ENCODE measurements at regions of chr19 and their contacts with region 1.

Region 1: GRCh38 chr19:47013041-47013517 is 6.6 kb upstream of the NPAS1 start:
- DNase-seq: peak; percentile 23
- H3K4me3 ChIP-seq: no peak overlapping the region
- H3K27ac ChIP-seq: peak overlapping the region; percentile 31
- H3K27me3 ChIP-seq: no peaks in the 10 kb centered on the region
- CTCF ChIP-seq: peak; percentile 97

Region 2: GRCh38 chr19:46759817-46760333 is 253.2 kb before region 1 on chr19:
- CTCF ChIA-PET with region 1: interaction called, 11 read pairs
- POLR2A ChIA-PET with region 1: no interaction called
- DNase-seq: peak; percentile 94
- H3K4me3 ChIP-seq: no peak overlapping the region
- H3K27ac ChIP-seq: peak overlapping the region; percentile 96
- H3K27me3 ChIP-seq: no peaks in the 10 kb centered on the region
- CTCF ChIP-seq: no peak

Region 3: DNA sequence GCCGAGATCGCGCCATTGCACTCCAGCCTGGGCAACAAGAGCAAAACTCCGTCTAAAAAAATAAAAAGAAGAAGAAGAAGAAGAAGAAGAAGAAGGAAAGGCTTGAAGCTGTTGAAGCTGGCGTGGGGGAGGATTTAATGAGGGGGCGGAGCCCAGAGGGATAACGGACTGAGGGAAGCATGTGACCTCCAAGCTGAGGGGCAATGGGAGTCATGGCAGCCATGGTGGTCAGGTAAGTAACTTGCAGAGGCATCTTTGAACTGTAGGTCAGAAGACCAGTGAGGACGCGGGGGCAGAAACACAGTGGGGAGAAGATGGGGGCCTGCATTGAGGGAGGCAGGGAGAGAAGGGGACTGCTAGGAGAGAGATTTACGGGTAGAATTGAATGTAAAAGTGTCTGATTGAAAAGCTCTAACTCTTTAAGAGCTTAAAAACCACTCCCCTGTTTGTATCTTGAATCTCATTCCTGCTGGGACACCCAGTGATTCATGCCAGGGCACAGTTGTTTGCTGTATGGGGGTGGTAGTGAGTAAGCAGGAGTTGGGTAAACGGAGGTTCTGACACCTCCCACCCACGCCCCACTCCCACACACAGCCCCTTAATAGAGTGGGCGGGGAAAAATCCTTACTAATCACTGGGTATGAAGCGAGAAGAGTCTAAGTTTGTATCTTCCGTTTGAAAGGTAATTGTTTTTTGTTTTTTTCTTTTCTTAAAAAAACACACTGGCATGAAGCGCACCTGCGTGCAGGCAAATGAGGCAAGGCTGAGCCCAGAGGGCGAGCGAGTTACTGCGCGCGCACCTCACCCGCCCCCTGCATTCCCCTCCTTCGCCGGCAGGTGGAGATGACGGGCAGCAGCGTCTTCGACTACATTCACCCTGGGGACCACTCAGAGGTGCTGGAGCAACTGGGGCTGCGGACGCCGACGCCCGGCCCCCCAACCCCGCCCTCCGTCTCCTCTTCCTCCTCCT is 22.3 kb after region 1 on chr19:
- CTCF ChIA-PET with region 1: interaction called, 46 read pairs
- POLR2A ChIA-PET with region 1: no interaction called
- DNase-seq: peak; percentile 47
- H3K4me3 ChIP-seq: peak overlapping the region; percentile 58
- H3K27ac ChIP-seq: peak overlapping the region; percentile 31
- H3K27me3 ChIP-seq: no peaks in the 10 kb centered on the region
- CTCF ChIP-seq: peak; percentile 91

Region 4: GRCh38 chr19:47124937-47125668 is 112.0 kb after region 1 on chr19:
- CTCF ChIA-PET with region 1: interaction called, 26 read pairs
- POLR2A ChIA-PET with region 1: no interaction called
- DNase-seq: no peak
- H3K4me3 ChIP-seq: no peak overlapping the region
- H3K27ac ChIP-seq: no peak overlapping the region
- H3K27me3 ChIP-seq: no peaks in the 10 kb centered on the region
- CTCF ChIP-seq: peak; percentile 76

Region 5: GRCh38 chr19:47130591-47131227 is 117.6 kb after region 1 on chr19 and contains the start of gene SAE1:
- CTCF ChIA-PET with region 1: interaction called, 26 read pairs
- POLR2A ChIA-PET with region 1: no interaction called
- DNase-seq: peak; percentile 98
- H3K4me3 ChIP-seq: peak within 1 kb of the TSS; percentile 92
- H3K27ac ChIP-seq: peak within 1 kb of the TSS; percentile 81
- H3K27me3 ChIP-seq: no peaks in the 10 kb centered on the region
- CTCF ChIP-seq: peak; percentile 59
- polyA plus RNA-seq, gene SAE1: 142 and 165 TPM in 2 replicates

Measured in AG04450 (cell line).